Mammary epithelial cell (primary cell): ENCODE measurements at regions of chr7 and their contacts with region 1.

Region 1: DNA sequence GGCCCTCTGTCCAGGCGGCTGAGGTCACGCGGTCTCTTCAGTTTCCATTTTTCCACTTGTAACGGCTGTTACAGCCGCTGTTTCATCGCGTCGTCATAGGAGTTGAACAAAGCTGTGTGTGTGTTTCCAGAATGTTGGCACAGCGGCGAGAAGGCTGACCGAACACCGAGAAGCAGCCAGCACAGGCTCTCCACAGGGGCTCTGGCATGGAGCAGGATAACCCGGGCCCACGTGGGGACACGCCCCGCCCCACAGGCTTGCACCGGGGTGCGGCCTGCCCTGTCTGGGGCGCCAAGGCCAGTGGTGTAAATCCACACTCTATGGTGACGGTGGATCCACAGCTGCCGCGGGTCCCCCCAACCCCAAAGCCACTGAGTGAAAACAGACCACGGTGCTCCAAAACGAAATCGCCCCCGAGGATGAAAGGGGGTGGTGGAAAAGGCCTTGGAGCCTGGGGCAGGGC is 448.2 kb downstream of the DNAJB6 start:
- DNase-seq: no peak
- H3K4me3 ChIP-seq: no peak overlapping the region
- H3K27ac ChIP-seq: no peak overlapping the region
- H3K4me1 ChIP-seq: no peaks in the 10 kb centered on the region
- H3K27me3 ChIP-seq: no peaks in the 10 kb centered on the region
- CTCF ChIP-seq: no peak

Region 2: DNA sequence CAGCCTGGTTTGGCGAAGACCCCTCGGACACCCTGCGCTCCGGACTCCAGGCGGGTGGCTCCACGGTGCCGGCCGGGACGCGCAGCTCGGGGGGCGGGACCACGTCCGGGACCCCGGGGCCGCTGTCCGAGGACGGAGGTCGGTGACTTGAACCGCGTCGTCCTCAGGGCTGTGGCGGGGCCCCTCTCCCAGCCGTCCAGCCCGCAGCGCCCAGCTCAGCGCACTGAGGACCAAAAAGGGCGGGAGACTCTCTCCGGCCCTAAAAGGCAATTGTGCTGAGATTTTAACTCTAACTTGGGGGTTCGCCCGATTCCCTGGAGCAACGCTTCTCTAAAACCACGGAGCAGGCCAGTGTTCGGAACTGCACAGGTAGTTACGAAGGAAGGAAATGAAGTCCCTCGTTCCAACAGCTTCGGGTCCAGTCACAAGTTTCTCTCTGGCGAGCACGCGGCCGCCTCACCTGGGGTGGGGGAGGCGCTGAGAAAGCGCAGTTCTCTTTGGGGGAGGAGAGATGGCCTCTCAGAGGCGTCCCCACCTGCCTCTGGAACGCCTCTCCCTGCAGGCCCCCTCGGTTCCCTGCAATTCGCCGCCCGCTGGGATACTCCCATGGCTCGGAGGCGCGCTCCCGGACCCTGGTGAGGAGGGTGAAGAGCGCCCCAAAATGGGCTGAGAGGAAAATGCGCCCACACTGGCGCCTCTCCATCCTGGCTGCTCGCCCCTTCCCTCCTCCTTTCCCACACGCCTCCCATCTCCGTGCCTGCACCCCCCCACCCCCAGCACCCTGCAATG is 95.5 kb before region 1 on chr7:
- CTCF ChIA-PET with region 1: no interaction called
- dilution Hi-C with region 1: loop called (anchors 5 kb)
- in situ Hi-C with region 1: no loop called
- intact Hi-C with region 1: no loop called
- DNase-seq: no peak
- H3K4me3 ChIP-seq: no peak overlapping the region
- H3K27ac ChIP-seq: no peak overlapping the region
- H3K4me1 ChIP-seq: no peaks in the 10 kb centered on the region
- H3K27me3 ChIP-seq: peaks cover 67% of the 10 kb centered on the region
- CTCF ChIP-seq: no peak

Region 3: GRCh38 chr7:157820796-157821195 is 35.8 kb after region 1 on chr7:
- CTCF ChIA-PET with region 1: no interaction called
- dilution Hi-C with region 1: loop called (anchors 5 kb)
- in situ Hi-C with region 1: no loop called
- intact Hi-C with region 1: no loop called
- DNase-seq: no peak
- H3K4me3 ChIP-seq: no peak overlapping the region
- H3K27ac ChIP-seq: no peak overlapping the region
- H3K4me1 ChIP-seq: no peaks in the 10 kb centered on the region
- H3K27me3 ChIP-seq: no peaks in the 10 kb centered on the region
- CTCF ChIP-seq: no peak

Region 4: GRCh38 chr7:157874870-157875229 is 89.8 kb after region 1 on chr7:
- CTCF ChIA-PET with region 1: no interaction called
- dilution Hi-C with region 1: loop called (anchors 5 kb)
- in situ Hi-C with region 1: no loop called
- intact Hi-C with region 1: no loop called
- DNase-seq: no peak
- H3K4me3 ChIP-seq: no peak overlapping the region
- H3K27ac ChIP-seq: no peak overlapping the region
- H3K4me1 ChIP-seq: no peaks in the 10 kb centered on the region
- H3K27me3 ChIP-seq: no peaks in the 10 kb centered on the region
- CTCF ChIP-seq: no peak